Ovary (tissue), 10 donors: ENCODE measurements at regions of chr10 and their contacts with region 1.

Region 1: DNA sequence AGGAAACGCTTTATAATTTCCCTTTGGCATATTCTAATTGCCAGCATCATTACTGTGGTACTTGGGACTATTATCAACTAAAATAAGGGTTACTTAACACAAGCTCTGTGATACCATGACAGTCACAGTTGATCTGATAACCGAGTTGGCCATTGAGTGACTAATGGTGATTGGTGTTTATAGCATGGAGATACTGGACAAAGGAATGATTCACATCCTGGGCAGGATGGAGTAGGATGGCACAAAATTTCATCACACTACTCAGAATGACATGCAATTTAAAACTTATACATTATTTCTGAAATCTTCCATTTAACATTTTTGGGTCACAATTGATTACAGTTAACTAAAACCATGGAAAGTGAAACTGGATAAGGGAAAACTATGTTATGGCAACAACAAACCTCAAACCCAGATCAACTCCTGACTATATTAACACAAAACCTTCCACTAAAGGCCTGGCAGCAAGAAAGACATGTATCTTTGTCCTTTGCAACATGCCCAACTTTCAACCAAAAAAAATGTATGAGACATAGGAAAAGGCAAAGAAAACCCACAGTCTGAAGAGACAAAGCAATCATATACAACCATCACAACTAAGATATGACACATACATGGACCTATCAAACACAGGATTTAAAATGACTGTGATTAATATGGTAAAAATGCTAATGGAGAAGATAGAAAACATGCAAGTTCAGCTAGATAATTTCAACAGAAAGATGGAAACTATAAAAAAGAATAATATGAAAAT is 208.5 kb upstream of the NRP1 start:
- DNase-seq: no peak
- H3K4me3 ChIP-seq: no peak overlapping the region
- H3K27ac ChIP-seq: no peak overlapping the region
- H3K4me1 ChIP-seq: peaks cover 1% of the 10 kb centered on the region
- H3K27me3 ChIP-seq: no peaks in the 10 kb centered on the region
- CTCF ChIP-seq: no peak
- EP300 ChIP-seq: no peak
- POLR2A ChIP-seq: no peak

Region 2: GRCh38 chr10:33509231-33509831 is 33.6 kb before region 1 on chr10:
- intact Hi-C with region 1: no loop called
- DNase-seq: peak in 1 of 5 donors; percentile 37
- H3K4me3 ChIP-seq: no peak overlapping the region
- H3K27ac ChIP-seq: no peak overlapping the region
- H3K4me1 ChIP-seq: no peaks in the 10 kb centered on the region
- H3K27me3 ChIP-seq: no peaks in the 10 kb centered on the region
- CTCF ChIP-seq: no peak
- EP300 ChIP-seq: no peak
- POLR2A ChIP-seq: no peak

Region 3: GRCh38 chr10:33602278-33602677 is 59.3 kb after region 1 on chr10:
- intact Hi-C with region 1: loop called in 1 of 4 experiments (anchors 2 kb)
- DNase-seq: no peak
- H3K4me3 ChIP-seq: no peak overlapping the region
- H3K27ac ChIP-seq: no peak overlapping the region
- H3K4me1 ChIP-seq: no peaks in the 10 kb centered on the region
- H3K27me3 ChIP-seq: no peaks in the 10 kb centered on the region
- CTCF ChIP-seq: no peak
- EP300 ChIP-seq: no peak
- POLR2A ChIP-seq: no peak

Region 4: GRCh38 chr10:33706191-33706590 is 163.3 kb after region 1 on chr10:
- intact Hi-C with region 1: no loop called
- DNase-seq: peak in 1 of 5 donors; percentile 47
- H3K4me3 ChIP-seq: no peak overlapping the region
- H3K27ac ChIP-seq: no peak overlapping the region
- H3K4me1 ChIP-seq: no peaks in the 10 kb centered on the region
- H3K27me3 ChIP-seq: no peaks in the 10 kb centered on the region
- CTCF ChIP-seq: no peak
- EP300 ChIP-seq: no peak
- POLR2A ChIP-seq: no peak